H1 (cell line): ENCODE measurements at regions of chr7 and their contacts with region 1.

Region 1: GRCh38 chr7:81469869-81470723 is 299.8 kb downstream of the HGF start:
- DNase-seq: peak; percentile 25 to 69
- H3K4me3 ChIP-seq: no peak overlapping the region
- H3K27ac ChIP-seq: no peak overlapping the region
- H3K4me1 ChIP-seq: no peaks in the 10 kb centered on the region
- H3K27me3 ChIP-seq: no peaks in the 10 kb centered on the region
- CTCF ChIP-seq: peak; percentile 56 to 83 (median 80)
- EP300 ChIP-seq: no peak
- POLR2A ChIP-seq: no peak
- RAD21 ChIP-seq: peak; percentile 88 to 91

Region 2: GRCh38 chr7:80699045-80699638 is 771.0 kb before region 1 on chr7:
- CTCF ChIA-PET with region 1: interaction called, 10 read pairs
- POLR2A ChIA-PET with region 1: no interaction called
- DNase-seq: no peak
- H3K4me3 ChIP-seq: no peak overlapping the region
- H3K27ac ChIP-seq: no peak overlapping the region
- H3K4me1 ChIP-seq: no peaks in the 10 kb centered on the region
- H3K27me3 ChIP-seq: no peaks in the 10 kb centered on the region
- CTCF ChIP-seq: peak in 2 of 3 experiments; percentile 51 to 52; a peak in 2 of 4 replicates
- EP300 ChIP-seq: no peak
- POLR2A ChIP-seq: no peak
- RAD21 ChIP-seq: peak; percentile 91 to 92

Region 3: GRCh38 chr7:81349044-81349443 is 121.1 kb before region 1 on chr7:
- CTCF ChIA-PET with region 1: no interaction called
- POLR2A ChIA-PET with region 1: no interaction called
- DNase-seq: no peak
- H3K4me3 ChIP-seq: no peak overlapping the region
- H3K27ac ChIP-seq: no peak overlapping the region
- H3K4me1 ChIP-seq: no peaks in the 10 kb centered on the region
- H3K27me3 ChIP-seq: no peaks in the 10 kb centered on the region
- CTCF ChIP-seq: no peak
- EP300 ChIP-seq: no peak
- POLR2A ChIP-seq: no peak
- RAD21 ChIP-seq: no peak

Region 4: DNA sequence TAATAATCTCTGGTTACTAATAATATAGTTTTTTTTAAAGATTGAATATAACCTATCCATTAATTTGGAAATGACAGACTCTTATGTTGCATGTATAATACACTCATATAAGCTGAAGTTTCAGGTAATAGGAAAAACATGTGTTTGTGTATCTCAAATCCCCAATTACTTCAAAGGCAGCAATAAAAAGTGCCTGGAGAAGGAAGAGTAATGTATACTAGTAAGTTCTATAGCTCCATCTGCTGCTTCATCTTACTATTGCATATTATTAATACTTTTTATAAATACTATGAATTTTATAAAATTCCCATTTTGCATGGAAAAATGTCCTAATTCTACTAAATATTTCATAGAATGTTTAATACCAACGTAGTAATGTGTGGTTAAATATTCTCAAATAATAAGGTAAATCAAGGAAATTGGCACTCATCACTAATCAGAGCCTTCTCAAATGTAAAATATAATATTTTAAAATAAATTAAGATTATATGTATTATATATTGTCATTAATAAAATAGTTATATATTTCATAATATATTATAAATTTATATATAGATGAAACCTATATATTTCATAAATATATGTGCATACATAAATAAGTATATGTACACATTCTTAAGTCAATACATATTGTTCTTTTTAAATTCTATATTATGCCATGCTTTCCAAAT is 12.1 kb before region 1 on chr7:
- CTCF ChIA-PET with region 1: interaction called, 44 read pairs
- POLR2A ChIA-PET with region 1: no interaction called
- DNase-seq: no peak
- H3K4me3 ChIP-seq: no peak overlapping the region
- H3K27ac ChIP-seq: no peak overlapping the region
- H3K4me1 ChIP-seq: no peaks in the 10 kb centered on the region
- H3K27me3 ChIP-seq: no peaks in the 10 kb centered on the region
- CTCF ChIP-seq: no peak; a peak in 1 of 4 replicates
- EP300 ChIP-seq: no peak
- POLR2A ChIP-seq: no peak
- RAD21 ChIP-seq: peak in 1 of 2 experiments; percentile 36; a peak in 3 of 4 replicates

Region 5: DNA sequence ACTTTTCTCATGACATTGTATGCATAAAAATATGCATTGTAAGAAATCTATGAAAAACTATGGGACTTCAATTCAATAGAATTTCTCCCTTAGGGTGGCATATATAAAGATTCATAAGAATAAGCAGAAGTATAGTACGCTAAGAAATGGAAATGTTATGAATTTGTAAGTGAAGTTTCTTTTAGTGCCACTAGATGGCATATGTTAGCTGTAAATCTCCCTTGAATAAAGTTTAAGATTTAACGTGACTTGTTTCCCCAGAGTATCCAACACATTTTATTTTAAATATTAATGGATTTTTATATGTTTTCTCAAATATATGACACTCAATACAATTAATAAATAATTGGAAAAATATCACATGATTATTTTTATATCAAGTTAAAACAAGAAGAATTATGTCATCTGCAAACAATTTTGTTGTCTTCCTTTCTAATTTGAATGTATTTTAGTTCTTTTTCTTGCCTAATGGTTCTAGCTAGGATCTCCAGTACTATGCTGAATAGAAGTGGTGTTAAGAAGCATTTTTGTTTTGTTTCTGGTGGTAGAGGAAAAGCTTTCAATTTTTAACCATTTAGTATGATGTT is 12.6 kb after region 1 on chr7:
- CTCF ChIA-PET with region 1: interaction called, 45 read pairs
- POLR2A ChIA-PET with region 1: no interaction called
- DNase-seq: no peak
- H3K4me3 ChIP-seq: no peak overlapping the region
- H3K27ac ChIP-seq: no peak overlapping the region
- H3K4me1 ChIP-seq: 0 out of 7 replicates have a peak, but pooled peaks cover 0 to 4% (median 0%) of the 10 kb centered on the region in 4 experiments
- H3K27me3 ChIP-seq: no peaks in the 10 kb centered on the region
- CTCF ChIP-seq: peak in 1 of 3 experiments; percentile 26; a peak in 1 of 4 replicates
- EP300 ChIP-seq: no peak
- POLR2A ChIP-seq: no peak
- RAD21 ChIP-seq: peak in 1 of 2 experiments; percentile 63

Region 6: DNA sequence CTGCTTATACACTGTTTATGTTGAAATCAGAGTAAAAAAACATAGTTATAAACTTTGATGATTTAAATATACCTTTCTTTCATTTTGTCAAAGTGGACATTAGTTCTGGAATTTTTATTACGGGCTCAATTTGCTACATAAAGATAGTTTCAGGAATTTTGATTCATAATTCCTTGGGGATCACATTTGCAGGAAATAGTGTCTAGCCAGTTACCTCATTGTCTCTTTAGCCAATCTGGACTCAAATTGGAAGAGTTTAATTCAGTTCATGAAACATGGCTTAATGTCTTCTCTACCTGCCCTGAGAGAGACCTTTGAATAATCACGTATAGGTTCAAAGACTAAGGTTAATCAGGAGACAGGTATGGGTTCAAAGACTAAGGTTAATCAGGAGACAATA is 37.1 kb after region 1 on chr7:
- CTCF ChIA-PET with region 1: no interaction called
- POLR2A ChIA-PET with region 1: no interaction called
- DNase-seq: no peak
- H3K4me3 ChIP-seq: no peak overlapping the region
- H3K27ac ChIP-seq: no peak overlapping the region
- H3K4me1 ChIP-seq: no peaks in the 10 kb centered on the region
- H3K27me3 ChIP-seq: no peaks in the 10 kb centered on the region
- CTCF ChIP-seq: no peak
- EP300 ChIP-seq: no peak
- POLR2A ChIP-seq: no peak
- RAD21 ChIP-seq: no peak

Region 7: GRCh38 chr7:81574723-81575326 is 104.7 kb after region 1 on chr7:
- CTCF ChIA-PET with region 1: no interaction called
- POLR2A ChIA-PET with region 1: no interaction called
- DNase-seq: no peak
- H3K4me3 ChIP-seq: no peak overlapping the region
- H3K27ac ChIP-seq: no peak overlapping the region
- H3K4me1 ChIP-seq: no peaks in the 10 kb centered on the region
- H3K27me3 ChIP-seq: no peaks in the 10 kb centered on the region
- CTCF ChIP-seq: no peak
- EP300 ChIP-seq: no peak
- POLR2A ChIP-seq: no peak
- RAD21 ChIP-seq: no peak